ENCODE measurements at regions of chr3 and their contacts with region 1.

Region 1: GRCh38 chr3:151903501-151903991 is 30.1 kb downstream of the SUCNR1 start:
- DNase-seq: no peak
- ATAC-seq: no peak
- H3K4me3 ChIP-seq: no peak overlapping the region
- H3K27ac ChIP-seq: no peak overlapping the region
- H3K4me1 ChIP-seq: peaks cover 4% of the 10 kb centered on the region
- H3K27me3 ChIP-seq: no peaks in the 10 kb centered on the region
- CTCF ChIP-seq: no peak

Region 2: GRCh38 chr3:151878465-151878864 is 25.1 kb before region 1 on chr3:
- intact Hi-C with region 1: loop called in 1 of 2 experiments (anchors 1 kb)
- DNase-seq: no peak
- ATAC-seq: no peak
- H3K4me3 ChIP-seq: no peak overlapping the region
- H3K27ac ChIP-seq: no peak overlapping the region
- H3K4me1 ChIP-seq: no peaks in the 10 kb centered on the region
- H3K27me3 ChIP-seq: no peaks in the 10 kb centered on the region
- CTCF ChIP-seq: no peak

Measured in psoas muscle (tissue), 8 donors.